ENCODE measurements at regions of chr12 and their contacts with region 1.

Region 1: DNA sequence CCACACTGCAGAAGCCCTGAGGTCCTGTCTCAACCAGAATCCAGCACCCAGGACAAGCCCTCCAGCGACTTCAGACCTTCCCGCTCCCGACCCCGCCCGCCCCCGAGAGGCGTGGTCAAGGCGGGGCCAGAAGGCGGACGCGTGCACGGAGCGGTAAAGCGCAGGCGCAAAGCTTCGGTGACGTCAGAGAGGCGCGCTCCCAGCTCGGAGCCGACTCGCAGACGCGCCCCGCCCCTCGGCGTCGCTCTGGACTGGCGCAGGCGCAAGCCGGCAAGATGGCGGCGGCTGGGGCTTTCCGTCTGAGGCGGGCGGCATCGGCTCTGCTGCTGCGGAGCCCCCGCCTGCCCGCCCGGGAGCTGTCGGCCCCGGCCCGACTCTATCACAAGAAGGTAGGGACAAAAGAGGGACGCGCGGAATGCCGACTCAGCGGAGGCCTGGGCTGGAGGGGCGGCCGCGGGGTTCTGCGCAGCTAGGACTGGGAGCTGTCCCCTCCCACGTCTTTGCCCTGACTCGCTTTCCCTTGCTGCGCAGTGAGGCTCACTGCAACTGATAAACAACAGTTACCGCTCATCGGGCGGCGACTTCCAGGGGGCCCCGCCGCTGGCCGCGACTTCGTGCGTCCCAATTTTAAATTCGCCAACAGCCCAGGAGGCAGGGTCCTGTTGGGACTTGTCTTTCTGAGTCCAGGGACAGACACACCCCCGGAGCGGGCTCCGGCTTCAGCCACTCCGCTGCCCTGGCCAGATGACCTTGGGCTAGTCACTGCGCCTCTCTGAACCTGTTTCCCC is at the start of gene ISCU:
- DNase-seq: peak; percentile 93 to 99
- H3K4me3 ChIP-seq: peak within 1 kb of the TSS; percentile 83
- CTCF ChIP-seq: no peak
- POLR2A ChIP-seq: no peak
- total RNA-seq, gene ISCU: 94.7 to 175 (median 137) TPM

Region 2: GRCh38 chr12:108611884-108612415 is 49.4 kb after region 1 on chr12:
- intact Hi-C with region 1: loop called (anchors 5 kb)
- DNase-seq: no peak
- H3K4me3 ChIP-seq: no peak overlapping the region
- CTCF ChIP-seq: no peak
- POLR2A ChIP-seq: no peak

Region 3: DNA sequence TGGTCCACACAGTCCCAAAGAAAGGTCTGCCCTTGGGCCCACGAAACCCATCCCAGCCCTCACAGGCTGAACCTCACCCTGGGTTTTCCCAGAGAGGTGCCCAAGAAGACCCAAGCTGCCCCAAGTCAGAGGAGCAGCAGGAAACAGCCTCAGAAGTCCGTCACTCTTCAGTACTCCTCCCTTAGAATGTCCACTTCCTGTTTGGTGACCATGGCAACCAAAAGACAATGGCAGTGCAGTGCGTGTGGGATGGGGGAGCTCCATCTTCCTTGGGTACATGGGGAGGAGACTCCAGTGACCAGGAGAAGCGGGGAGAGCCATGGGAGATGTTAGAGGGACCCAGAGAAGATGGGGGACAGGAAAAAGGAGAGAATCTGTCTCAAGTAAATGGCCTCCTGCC is 59.9 kb after region 1 on chr12:
- intact Hi-C with region 1: no loop called
- DNase-seq: no peak
- H3K4me3 ChIP-seq: no peak overlapping the region
- CTCF ChIP-seq: no peak
- POLR2A ChIP-seq: no peak

Region 4: DNA sequence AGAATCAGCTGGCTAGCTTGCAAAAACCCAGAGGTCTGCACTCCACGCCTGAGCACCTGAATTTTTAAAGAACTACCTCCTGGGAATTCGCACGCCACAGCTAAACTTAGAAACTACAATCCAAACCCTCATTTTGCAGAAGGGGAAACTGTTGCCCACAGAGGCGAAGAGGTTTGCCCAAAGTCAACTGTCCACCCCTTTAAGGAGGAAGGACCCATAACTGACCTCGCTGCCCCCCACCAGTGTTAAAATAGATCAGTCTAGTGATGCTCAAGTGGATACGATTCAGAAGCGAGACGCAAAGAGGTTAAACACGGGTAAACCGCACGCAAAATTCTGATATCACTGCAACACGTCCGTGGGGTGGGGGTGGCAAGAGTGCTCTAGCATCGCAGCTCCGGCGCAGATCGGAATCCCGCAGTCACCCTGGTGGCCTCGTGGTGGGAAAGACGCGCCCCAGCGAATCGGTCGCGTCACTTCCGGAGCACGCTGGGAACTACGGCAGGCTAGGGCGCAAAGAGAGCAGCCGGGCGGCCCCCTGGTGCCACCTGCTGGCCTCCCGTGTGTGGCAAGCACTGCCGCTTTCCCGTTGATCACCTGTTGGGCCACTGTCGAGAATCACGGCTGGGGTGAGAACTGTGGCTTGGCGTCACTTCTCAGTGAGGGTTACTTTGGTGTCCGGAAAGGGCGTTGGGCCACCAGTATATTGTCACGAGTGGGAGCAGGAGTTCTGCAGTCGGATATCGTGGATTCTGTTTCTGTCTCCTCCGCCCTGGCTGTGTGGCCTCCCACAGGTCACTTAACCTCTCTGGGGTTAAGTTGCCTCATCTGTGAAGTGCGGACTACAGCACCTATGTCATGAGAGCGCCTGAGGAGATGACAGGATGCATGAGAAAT is 530.7 kb after region 1 on chr12 and contains the start of gene ALKBH2:
- intact Hi-C with region 1: loop called (anchors 10 kb)
- DNase-seq: peak; percentile 90 to 98
- H3K4me3 ChIP-seq: peak within 1 kb of the TSS; percentile 17
- CTCF ChIP-seq: peak in 1 of 3 donors; percentile 99
- POLR2A ChIP-seq: no peak
- total RNA-seq, gene ALKBH2: 17.6 to 36.5 (median 26.0) TPM